T-cell (primary cell): ENCODE measurements at regions of chr9 and their contacts with region 1.

Region 1: DNA sequence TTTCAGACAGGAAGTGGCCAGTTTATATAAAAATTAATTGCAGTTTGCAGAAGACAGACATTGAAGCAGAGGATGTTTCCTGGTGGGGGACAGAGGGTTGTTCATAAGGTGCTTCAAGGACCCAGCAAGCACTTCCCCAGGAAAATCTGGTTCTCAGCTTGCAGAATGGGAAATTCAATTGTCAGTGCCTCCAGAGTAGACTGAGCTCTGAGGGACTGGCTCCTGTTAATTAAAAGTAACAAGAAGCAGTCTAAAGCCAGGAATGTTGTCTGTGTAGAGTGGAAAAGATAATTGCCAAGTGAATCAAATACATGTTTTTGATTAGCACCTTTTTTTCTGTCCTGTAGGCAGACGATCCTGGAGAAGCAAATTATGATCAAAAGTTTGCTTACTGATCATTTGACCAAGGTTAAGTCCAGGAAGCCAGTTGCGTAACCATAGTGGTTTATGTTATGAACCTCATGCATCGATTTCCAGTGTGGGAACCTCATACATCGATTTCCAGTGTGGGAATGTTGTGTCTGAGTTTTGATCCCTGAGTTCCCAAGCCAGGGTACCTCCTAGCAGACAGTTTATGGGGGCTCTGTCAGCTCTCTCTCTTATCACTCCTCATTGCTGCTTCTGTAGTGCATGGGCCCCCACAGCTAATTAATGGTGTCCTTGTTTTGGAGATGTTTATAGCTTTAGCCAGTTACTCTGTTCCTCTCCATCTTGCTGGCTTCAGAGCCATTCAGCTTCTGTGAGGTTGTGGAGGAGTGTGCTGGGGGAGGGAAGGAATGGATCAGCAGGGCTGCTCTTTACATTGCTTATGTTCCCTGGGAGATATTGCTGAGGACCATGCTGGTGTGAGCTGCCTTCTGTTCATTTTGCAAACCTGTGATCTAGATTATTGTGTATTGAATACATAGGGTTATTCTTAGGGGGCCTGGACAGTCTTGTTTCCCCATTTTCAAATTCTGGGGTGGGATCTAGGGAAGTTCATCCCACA is 17.1 kb downstream of the MSANTD3 start:
- DNase-seq: no peak
- ATAC-seq: no peak
- H3K4me3 ChIP-seq: no peak overlapping the region
- H3K4me3 Mint-ChIP-seq: no peak overlapping the region
- H3K27ac ChIP-seq: no peak overlapping the region
- H3K27ac Mint-ChIP-seq: no peak overlapping the region
- H3K4me1 ChIP-seq: no peaks in the 10 kb centered on the region
- H3K4me1 Mint-ChIP-seq: peaks cover 0 to 5% (median 2%) of the 10 kb centered on the region in 3 donors
- H3K27me3 ChIP-seq: no peaks in the 10 kb centered on the region
- H3K27me3 Mint-ChIP-seq: no peaks in the 10 kb centered on the region

Region 2: DNA sequence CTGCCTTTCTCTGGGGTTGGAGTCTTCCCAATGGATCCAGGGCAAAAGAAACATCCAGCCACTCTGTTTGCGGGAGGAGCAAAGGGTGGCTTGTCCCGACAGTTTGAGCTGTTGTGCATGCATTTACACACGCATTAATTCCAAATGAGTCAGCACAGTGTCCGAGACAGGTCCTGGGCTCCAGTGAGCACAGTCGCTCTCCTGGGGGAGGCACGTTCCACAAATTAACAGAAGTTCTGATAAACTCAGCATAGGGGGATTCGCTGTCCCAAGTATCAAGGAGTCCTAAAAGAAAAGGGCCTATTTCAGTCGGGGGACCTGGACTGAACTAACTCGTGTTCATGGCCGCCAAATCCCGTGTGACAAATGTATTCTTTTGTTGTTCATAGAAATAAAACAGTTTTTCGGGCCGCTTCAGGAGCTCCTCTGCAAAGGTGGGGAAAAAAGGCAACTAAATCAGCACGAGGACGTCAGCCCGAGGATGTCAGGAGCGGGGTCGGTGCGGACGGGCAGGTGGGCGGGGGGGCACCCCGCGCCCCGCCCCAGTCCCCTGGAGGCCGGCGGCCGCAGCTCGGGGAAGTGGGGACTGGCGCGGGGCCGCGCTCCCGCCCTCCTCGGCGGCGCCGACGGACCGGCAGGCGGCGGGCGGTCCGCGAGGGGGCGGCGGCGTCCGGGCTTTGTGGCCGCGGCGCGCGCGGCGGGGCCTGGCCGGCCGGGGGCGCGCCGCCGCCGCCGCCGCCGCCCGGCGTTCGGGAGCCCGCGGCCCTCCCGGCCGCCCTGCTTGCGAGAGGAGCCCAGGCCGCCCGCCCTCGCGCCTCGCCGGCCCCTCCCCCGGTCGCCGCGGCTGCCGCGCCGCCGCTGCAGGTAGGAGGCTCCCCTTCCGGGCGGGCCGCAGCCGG is 17.3 kb before region 1 on chr9 and contains the start of gene MSANTD3:
- CTCF ChIA-PET with region 1: interaction called in 1 of 2 experiments, 4 read pairs
- POLR2A ChIA-PET with region 1: interaction called in 1 of 2 experiments, 10 read pairs
- DNase-seq: peak; percentile 6 to 73 (median 44)
- ATAC-seq: peak; percentile 86 to 91 (median 88)
- H3K4me3 ChIP-seq: peak within 1 kb of the TSS; percentile 73 to 77
- H3K4me3 Mint-ChIP-seq: peak within 1 kb of the TSS; percentile 93 to 99 (median 98)
- H3K27ac ChIP-seq: peak within 1 kb of the TSS; percentile 20
- H3K27ac Mint-ChIP-seq: peak within 1 kb of the TSS; percentile 89 to 93
- H3K4me1 ChIP-seq: peaks cover 5 to 15% of the 10 kb centered on the region in 2 experiments
- H3K4me1 Mint-ChIP-seq: peaks cover 36 to 46% (median 39%) of the 10 kb centered on the region in 3 donors
- H3K27me3 ChIP-seq: peaks cover 0 to 10% of the 10 kb centered on the region in 2 experiments
- H3K27me3 Mint-ChIP-seq: peaks cover 2 to 4% of the 10 kb centered on the region in 2 donors
- total RNA-seq, gene MSANTD3: 7.7 to 15.3 (median 13.1) TPM